K562 (cell line): ENCODE measurements at regions of chr22 and their contacts with region 1.

Region 1: DNA sequence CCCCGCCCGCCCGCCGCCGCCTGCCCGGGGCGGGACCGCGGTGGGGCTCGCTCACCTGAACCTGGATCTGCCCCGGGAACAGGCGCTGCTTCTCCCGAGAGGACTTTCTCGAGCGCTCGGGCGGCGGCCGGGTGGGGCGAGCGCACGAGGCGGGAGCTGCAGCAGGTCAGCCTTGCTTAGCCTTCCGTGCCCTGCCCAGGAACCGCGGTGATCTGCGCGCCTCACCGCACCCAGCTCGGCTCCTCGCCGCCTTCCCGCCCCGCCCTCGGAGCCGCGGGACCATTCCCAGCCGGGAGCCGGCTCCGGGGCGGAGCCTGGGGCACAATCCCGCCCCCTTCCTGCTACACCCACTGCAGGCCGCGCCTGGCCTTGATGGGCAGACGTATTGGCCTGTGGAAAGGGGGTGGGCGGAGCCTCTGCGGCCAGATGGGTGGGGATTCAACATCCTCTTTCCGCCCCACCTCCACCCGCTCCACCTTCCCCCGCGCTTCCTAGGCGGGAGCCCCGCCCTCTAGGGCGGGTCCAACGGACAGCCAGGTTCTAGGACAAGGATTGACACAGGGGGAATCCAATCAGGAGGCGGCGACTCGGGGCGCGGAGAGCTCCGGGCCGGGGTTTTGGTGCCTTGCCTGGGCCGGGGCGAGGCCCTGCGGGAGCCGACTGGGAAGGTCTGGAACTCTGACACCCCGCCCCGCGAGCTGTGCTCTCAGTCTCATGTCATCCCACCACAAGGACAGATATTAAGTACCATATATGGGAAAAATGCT is at the start of gene MYH9:
- DNase-seq: peak; percentile 93 to 98 (median 96)
- ATAC-seq: peak; percentile 94
- H3K4me3 ChIP-seq: peak within 1 kb of the TSS; percentile 76
- H3K27ac ChIP-seq: peak within 1 kb of the TSS; percentile 87
- H3K4me1 ChIP-seq: peaks cover 22 to 23% of the 10 kb centered on the region in 2 experiments; a peak in 4 of 5 replicates
- H3K27me3 ChIP-seq: no peaks in the 10 kb centered on the region
- CTCF ChIP-seq: no peak
- EP300 ChIP-seq: no peak
- POLR2A ChIP-seq: peak; percentile 83
- RAD21 ChIP-seq: no peak
- polyA plus RNA-seq, gene MYH9: 0.71 to 1.3 TPM

Region 2: DNA sequence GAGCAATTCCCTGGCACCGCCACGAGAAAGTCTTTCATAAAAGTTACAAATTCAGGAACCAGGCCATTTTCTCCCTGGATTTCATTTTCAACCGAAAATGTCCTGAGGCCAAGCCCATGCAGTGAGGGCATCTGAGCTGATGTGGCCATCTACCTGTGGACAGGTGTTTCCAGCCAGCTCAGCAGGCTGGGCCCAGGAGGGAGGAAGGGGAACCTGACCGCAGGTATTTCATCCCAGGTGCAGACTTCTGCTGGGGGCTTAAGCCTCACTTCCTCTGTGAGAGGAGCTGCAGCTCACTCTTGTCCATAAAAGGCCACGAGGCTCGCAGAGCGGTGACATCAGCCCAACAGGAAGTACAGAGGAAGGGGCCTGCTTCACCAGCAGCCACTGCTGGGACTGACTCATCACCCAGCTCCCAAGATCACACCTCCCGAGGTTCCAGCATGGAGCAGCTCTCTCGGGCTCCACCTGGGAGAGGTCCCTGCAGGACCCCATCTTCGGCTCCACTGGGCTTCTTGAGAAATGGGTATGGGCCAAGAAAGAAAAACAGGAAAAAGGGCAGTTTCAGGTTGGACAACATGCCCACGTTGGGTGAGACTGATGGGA is 56.5 kb before region 1 on chr22:
- CTCF ChIA-PET with region 1: no interaction called
- POLR2A ChIA-PET with region 1: interaction called, 6 read pairs
- in situ Hi-C with region 1: no loop called
- intact Hi-C with region 1: loop called (anchors 1 kb)
- DNase-seq: peak; percentile 49 to 83 (median 63)
- ATAC-seq: peak; percentile 69
- H3K4me3 ChIP-seq: no peak overlapping the region
- H3K27ac ChIP-seq: peak overlapping the region; percentile 91
- H3K4me1 ChIP-seq: peaks cover 72 to 75% of the 10 kb centered on the region in 2 experiments
- H3K27me3 ChIP-seq: no peaks in the 10 kb centered on the region
- CTCF ChIP-seq: no peak
- EP300 ChIP-seq: peak; percentile 66
- POLR2A ChIP-seq: no peak
- RAD21 ChIP-seq: no peak

Region 3: DNA sequence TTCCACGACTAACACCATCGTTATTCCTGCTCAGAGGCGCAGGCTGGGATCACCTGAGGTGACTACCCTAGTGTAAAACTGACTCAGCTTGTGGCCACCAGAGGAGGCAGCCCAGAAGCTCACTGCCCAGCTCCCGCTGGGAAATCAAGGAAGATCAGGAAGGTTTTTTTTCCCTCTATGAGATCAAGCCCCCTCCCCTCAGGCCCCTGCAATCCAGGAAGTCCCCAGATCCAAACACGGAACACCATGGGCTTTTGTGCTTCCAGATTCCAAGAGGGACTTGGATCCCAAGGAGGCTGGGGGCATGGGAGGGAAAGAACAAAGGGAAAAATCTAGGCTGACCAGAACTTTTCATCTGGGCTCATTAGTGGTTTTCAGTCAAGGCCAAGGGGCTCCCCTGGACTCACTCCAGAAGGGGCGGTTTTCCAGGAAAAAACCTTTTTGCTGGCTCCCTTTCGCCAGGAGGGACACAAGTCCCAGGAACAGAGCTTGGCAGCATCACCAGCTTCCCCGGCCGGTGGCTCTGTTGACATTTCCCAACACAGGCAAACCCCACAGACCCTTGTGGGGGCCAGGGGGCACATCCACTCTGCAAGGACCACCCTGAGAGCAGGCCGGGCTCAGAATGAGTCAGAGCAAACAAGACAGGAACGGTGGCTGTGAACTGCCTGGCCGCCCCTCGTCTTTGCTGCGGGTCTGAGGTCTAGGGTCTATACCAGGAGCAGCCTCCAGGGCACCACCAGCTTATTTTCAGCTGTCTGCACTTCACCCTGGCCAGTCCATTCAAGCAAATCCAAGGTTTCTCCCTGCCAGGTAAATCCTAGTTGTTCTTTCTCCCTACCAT is 37.0 kb before region 1 on chr22:
- CTCF ChIA-PET with region 1: no interaction called
- POLR2A ChIA-PET with region 1: no interaction called
- in situ Hi-C with region 1: no loop called
- intact Hi-C with region 1: no loop called
- DNase-seq: no peak
- ATAC-seq: no peak
- H3K4me3 ChIP-seq: no peak overlapping the region
- H3K27ac ChIP-seq: no peak overlapping the region
- H3K4me1 ChIP-seq: peaks cover 12 to 15% of the 10 kb centered on the region in 2 experiments
- H3K27me3 ChIP-seq: no peaks in the 10 kb centered on the region
- CTCF ChIP-seq: no peak
- EP300 ChIP-seq: no peak
- POLR2A ChIP-seq: no peak
- RAD21 ChIP-seq: no peak

Region 4: GRCh38 chr22:36423461-36424404 is 35.8 kb after region 1 on chr22:
- CTCF ChIA-PET with region 1: no interaction called
- POLR2A ChIA-PET with region 1: no interaction called
- in situ Hi-C with region 1: no loop called
- intact Hi-C with region 1: loop called (anchors 5 kb)
- DNase-seq: peak; percentile 41 to 75 (median 52)
- ATAC-seq: peak; percentile 73
- H3K4me3 ChIP-seq: no peak overlapping the region
- H3K27ac ChIP-seq: peak overlapping the region; percentile 49; the same call in 2 of the 3 replicates
- H3K4me1 ChIP-seq: peaks cover 38 to 40% of the 10 kb centered on the region in 2 experiments
- H3K27me3 ChIP-seq: no peaks in the 10 kb centered on the region
- CTCF ChIP-seq: peak in 1 of 3 experiments; percentile 11; a peak in 1 of 6 replicates
- EP300 ChIP-seq: peak; percentile 74
- POLR2A ChIP-seq: no peak
- RAD21 ChIP-seq: peak in 1 of 2 experiments; percentile 48; a peak in 3 of 4 replicates

Region 5: GRCh38 chr22:36454916-36455570 is 67.1 kb after region 1 on chr22:
- CTCF ChIA-PET with region 1: no interaction called
- POLR2A ChIA-PET with region 1: interaction called, 4 read pairs
- in situ Hi-C with region 1: no loop called
- intact Hi-C with region 1: loop called (anchors 10 kb)
- DNase-seq: peak; percentile 85 to 93 (median 92)
- ATAC-seq: peak; percentile 88
- H3K4me3 ChIP-seq: peak overlapping the region; percentile 51
- H3K27ac ChIP-seq: peak overlapping the region; percentile 86
- H3K4me1 ChIP-seq: peaks cover 27 to 44% of the 10 kb centered on the region in 2 experiments
- H3K27me3 ChIP-seq: no peaks in the 10 kb centered on the region
- CTCF ChIP-seq: peak; percentile 21 to 46 (median 35); a peak in 4 of 6 replicates
- EP300 ChIP-seq: no peak; the same call in 1 of the 2 replicates
- POLR2A ChIP-seq: peak; percentile 75
- RAD21 ChIP-seq: peak; percentile 34 to 51

Region 6: GRCh38 chr22:36636916-36637315 is 249.0 kb after region 1 on chr22:
- CTCF ChIA-PET with region 1: no interaction called
- POLR2A ChIA-PET with region 1: no interaction called
- in situ Hi-C with region 1: no loop called
- intact Hi-C with region 1: no loop called
- DNase-seq: no peak
- ATAC-seq: no peak
- H3K4me3 ChIP-seq: no peak overlapping the region
- H3K27ac ChIP-seq: no peak overlapping the region
- H3K4me1 ChIP-seq: no peaks in the 10 kb centered on the region
- H3K27me3 ChIP-seq: peaks cover 0 to 28% of the 10 kb centered on the region in 2 experiments; a peak in 3 of 5 replicates
- CTCF ChIP-seq: no peak
- EP300 ChIP-seq: no peak
- POLR2A ChIP-seq: no peak
- RAD21 ChIP-seq: no peak